AG04450 (cell line): ENCODE measurements at regions of chr17 and their contacts with region 1.

Region 1: GRCh38 chr17:13031718-13032350 is 14.0 kb upstream of the ELAC2 start:
- DNase-seq: peak; percentile 13
- H3K4me3 ChIP-seq: no peak overlapping the region
- H3K27ac ChIP-seq: no peak overlapping the region
- H3K27me3 ChIP-seq: peaks cover 14% of the 10 kb centered on the region
- CTCF ChIP-seq: peak; percentile 87

Region 2: DNA sequence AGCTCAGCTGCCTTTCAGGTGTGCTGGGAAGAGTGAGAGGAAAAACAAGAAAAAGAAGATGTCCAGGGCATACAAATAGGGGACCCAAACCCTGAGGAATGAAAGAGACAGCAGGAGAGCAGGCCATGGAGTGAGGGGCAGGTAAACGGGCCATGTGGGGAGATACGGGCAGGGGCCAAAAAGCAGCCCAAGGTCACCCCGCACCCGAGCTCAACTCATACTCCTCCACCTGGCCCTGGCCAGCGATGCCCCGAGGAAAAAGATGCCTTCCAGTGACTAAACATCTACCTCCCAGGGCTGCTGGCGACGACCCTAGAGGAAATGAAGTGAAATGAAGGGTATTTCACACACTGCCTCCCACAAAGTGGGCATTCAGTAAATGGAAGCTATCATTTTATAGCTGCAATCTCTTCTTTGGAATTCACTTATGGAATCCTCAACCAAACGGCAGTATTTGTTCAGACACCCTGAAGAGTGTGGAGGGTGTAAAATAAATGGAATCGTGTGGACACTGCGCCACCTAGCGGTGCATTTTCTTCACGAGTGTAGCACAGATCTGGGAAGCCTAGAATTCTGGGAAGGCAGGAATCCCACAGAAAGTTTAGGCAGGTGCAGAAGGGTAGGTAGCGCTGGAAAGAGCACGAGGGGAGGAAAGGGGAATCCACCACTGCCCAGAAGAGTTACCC is 28.9 kb before region 1 on chr17:
- CTCF ChIA-PET with region 1: interaction called, 16 read pairs
- POLR2A ChIA-PET with region 1: no interaction called
- DNase-seq: peak; percentile 55
- H3K4me3 ChIP-seq: no peak overlapping the region
- H3K27ac ChIP-seq: no peak overlapping the region
- H3K27me3 ChIP-seq: no peaks in the 10 kb centered on the region
- CTCF ChIP-seq: peak; percentile 80

Region 3: GRCh38 chr17:13017659-13018459 is 14.0 kb before region 1 on chr17 and contains the start of gene ELAC2:
- CTCF ChIA-PET with region 1: interaction called, 114 read pairs
- POLR2A ChIA-PET with region 1: no interaction called
- DNase-seq: peak; percentile 98
- H3K4me3 ChIP-seq: peak within 1 kb of the TSS; percentile 89
- H3K27ac ChIP-seq: peak within 1 kb of the TSS; percentile 69
- H3K27me3 ChIP-seq: no peaks in the 10 kb centered on the region
- CTCF ChIP-seq: no peak
- polyA plus RNA-seq, gene ELAC2: 41.0 and 42.5 TPM in 2 replicates

Region 4: GRCh38 chr17:13044572-13045065 is 12.8 kb after region 1 on chr17:
- CTCF ChIA-PET with region 1: interaction called, 64 read pairs
- POLR2A ChIA-PET with region 1: no interaction called
- DNase-seq: no peak
- H3K4me3 ChIP-seq: no peak overlapping the region
- H3K27ac ChIP-seq: no peak overlapping the region
- H3K27me3 ChIP-seq: peaks cover 5% of the 10 kb centered on the region
- CTCF ChIP-seq: no peak

Region 5: DNA sequence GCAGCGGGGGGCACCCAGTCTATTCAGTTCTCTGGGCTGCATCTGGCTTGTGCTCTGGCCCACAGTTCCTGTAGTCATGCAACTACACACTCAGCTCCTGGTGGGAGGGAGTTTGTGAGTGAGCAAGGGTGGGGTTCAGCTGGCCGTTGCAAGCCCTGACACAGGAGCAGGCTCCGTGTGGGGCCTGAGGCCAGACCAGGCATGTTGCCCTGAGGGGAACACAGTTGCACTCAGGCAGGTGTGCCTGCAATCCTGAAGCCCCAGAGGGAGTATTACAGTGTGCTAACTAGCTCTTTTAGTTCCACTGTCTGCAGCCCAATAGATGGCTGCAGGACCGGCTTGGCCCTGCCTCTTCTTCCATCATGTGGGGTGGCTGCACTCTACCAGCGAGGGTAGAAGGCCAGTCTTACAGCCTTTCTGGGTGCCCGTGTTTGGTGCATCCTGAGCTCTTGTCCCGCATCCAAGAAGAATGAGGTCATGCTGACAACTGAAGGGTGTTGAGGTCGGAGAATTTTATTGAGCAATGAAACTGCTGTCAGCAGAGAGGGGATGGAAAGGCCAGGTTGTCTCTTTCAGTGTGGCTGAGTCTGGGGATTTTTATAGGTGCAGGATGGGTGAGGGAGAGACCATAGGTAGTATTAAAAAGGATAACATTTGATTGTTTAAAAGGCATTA is 35.9 kb after region 1 on chr17:
- CTCF ChIA-PET with region 1: interaction called, 17 read pairs
- POLR2A ChIA-PET with region 1: no interaction called
- DNase-seq: no peak
- H3K4me3 ChIP-seq: no peak overlapping the region
- H3K27ac ChIP-seq: no peak overlapping the region
- H3K27me3 ChIP-seq: no peaks in the 10 kb centered on the region
- CTCF ChIP-seq: no peak

Region 6: GRCh38 chr17:14300575-14301278 is 1268.9 kb after region 1 on chr17 and contains the start of gene HS3ST3B1:
- CTCF ChIA-PET with region 1: interaction called, 24 read pairs
- POLR2A ChIA-PET with region 1: interaction called, 3 read pairs
- DNase-seq: peak; percentile 100
- H3K4me3 ChIP-seq: peak within 1 kb of the TSS; percentile 94
- H3K27ac ChIP-seq: peak within 1 kb of the TSS; percentile 81
- H3K27me3 ChIP-seq: no peaks in the 10 kb centered on the region
- CTCF ChIP-seq: no peak; the same call in 1 of the 2 replicates
- polyA plus RNA-seq, gene HS3ST3B1: 9.6 and 10.3 TPM in 2 replicates

Region 7: DNA sequence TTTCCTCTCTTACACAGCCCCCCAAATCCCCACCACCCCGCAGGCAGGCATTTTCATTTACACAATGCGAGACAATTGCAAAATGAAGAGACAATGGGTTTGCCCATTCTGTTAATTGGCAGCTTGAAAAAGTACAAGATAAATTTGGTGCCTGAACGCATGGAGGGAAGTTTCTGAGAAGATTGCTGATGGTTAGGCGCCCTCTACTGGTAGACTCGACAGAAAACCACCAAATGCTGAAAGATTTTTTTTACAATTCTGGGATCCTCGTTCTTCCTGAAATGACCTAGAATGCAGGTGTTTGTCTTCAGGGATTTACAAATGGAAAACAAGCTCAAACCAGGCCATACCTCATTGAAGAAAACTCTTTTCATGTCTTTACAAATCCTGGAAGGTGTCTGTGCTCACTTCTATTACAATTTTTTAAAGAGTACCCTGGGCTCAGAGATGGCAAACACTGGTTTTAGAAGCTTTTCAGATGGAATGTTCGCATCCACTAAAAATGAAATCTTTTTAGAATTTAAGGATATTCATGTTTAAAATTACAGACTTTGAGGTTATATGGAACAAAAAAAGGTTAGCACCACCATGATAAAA is 1894.8 kb after region 1 on chr17:
- CTCF ChIA-PET with region 1: interaction called, 10 read pairs
- POLR2A ChIA-PET with region 1: no interaction called
- DNase-seq: peak; percentile 51
- H3K4me3 ChIP-seq: no peak overlapping the region
- H3K27ac ChIP-seq: no peak overlapping the region
- H3K27me3 ChIP-seq: no peaks in the 10 kb centered on the region
- CTCF ChIP-seq: peak; percentile 83